ENCODE measurements at regions of chrX and their contacts with region 1.

Region 1: DNA sequence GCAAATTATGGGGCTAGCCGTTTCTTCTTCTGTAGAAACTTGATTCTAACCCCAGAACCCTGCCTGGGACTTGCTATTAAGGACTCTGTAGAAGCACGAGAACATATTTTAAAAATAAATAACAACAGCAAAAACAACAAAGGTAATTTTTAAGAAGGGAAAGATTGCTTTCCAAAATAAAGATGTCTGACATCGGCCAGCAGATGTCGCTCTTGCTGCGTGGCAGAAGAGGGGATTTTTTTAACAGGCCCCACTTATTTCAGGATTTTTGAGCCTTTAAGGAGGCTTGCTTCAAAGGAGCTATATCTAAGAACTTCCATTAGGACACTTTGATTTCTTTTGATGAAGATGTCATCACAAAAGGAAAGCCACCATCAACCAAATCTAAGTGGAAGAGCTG is 62.8 kb upstream of the EGFL6 start:
- DNase-seq: no peak
- H3K4me3 ChIP-seq: no peak overlapping the region
- H3K27ac ChIP-seq: no peak overlapping the region
- H3K4me1 ChIP-seq: no peaks in the 10 kb centered on the region
- H3K27me3 ChIP-seq: no peaks in the 10 kb centered on the region
- CTCF ChIP-seq: peak; percentile 66 to 70

Region 2: DNA sequence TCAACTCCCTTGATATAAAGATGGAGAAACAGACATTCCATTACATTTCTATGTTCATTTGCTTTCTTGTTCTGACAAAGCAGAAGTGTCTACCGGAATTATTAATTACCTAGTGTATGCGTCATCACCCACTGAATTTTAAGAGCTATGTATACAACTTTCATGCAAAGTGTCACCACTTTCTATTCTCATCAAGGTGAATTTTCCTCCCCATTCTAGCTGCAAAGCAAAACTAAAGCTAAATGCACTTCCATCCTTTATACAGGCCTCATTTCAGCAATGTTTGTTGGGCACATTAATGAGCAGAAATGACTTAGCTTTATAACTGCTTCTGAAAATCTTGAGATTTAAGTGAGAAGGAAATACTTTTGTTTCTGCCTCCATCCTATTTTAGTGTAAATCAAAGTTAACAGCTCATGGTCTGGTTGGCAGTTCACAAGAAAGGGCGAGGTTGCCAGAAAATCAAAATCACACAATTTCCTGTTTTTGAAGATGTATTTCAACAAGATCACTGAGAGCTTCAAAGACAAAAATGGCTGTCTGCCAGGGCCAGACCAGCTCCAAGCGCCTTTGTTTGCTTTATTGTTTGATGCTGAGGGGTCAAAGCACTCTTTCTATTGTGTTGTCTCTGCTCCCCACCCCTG is 454.9 kb before region 1 on chrX:
- intact Hi-C with region 1: no loop called
- DNase-seq: no peak
- H3K4me3 ChIP-seq: no peak overlapping the region
- H3K27ac ChIP-seq: no peak overlapping the region
- H3K4me1 ChIP-seq: no peaks in the 10 kb centered on the region
- H3K27me3 ChIP-seq: no peaks in the 10 kb centered on the region
- CTCF ChIP-seq: no peak

Region 3: DNA sequence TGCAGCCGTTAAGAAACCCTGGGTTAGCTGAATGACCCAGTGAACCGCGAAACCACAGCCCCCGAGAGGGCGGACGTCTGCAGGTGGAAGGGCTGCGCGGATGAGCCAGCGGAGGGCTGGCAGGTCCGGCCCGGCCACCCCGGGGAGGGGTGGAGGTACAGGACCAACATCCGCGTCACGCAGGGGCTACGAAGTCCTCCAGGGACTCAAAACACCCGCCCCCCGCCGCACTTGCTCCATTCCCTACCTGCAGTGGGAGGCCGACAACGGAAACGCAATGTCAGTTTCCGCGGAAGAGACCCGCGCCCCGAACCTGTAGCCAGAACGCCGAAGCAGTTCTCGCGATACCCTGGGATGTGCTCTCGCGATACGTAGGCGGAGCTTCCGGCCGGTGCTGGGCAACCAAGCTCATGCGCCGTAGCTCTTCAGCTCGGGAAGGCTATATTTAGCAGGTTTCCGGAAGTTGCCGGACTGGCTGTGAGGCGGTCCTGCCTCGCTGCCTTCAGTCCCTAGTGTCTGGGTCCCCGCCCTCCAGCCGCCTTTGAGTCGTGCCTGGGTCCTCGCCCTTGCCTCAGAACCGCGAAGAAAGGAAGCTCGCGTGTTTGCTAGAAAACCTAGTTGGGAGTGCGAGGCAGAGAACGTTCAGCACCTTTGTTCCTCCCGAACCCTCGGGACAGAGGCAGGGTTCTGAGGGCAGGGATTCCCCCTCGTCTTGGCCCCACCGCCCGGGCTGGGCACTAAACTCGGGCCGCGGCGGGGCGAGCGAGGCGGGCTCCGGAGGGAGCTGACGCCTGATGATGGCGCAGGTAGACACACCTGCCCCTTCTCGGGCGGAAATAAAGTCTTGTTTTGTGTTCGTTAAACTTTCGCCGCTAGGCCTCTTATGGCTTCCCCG is 228.0 kb after region 1 on chrX and contains the starts of genes OFD1 and TRAPPC2:
- intact Hi-C with region 1: loop called (anchors 10 kb)
- DNase-seq: peak; percentile 91 to 94
- H3K4me3 ChIP-seq: peak within 1 kb of the TSS; percentile 77 to 83
- H3K27ac ChIP-seq: peak within 1 kb of the TSS; percentile 86 to 91
- H3K4me1 ChIP-seq: peaks cover 0 to 12% (median 3%) of the 10 kb centered on the region in 4 donors
- H3K27me3 ChIP-seq: no peaks in the 10 kb centered on the region
- CTCF ChIP-seq: no peak

Region 4: GRCh38 chrX:15515931-15516330 is 2009.4 kb after region 1 on chrX:
- intact Hi-C with region 1: no loop called
- DNase-seq: peak in 1 of 2 donors; percentile 18
- H3K4me3 ChIP-seq: no peak overlapping the region
- H3K27ac ChIP-seq: no peak overlapping the region
- H3K4me1 ChIP-seq: no peaks in the 10 kb centered on the region
- H3K27me3 ChIP-seq: no peaks in the 10 kb centered on the region
- CTCF ChIP-seq: no peak